ENCODE measurements at regions of chr7 and their contacts with region 1.

Region 1: DNA sequence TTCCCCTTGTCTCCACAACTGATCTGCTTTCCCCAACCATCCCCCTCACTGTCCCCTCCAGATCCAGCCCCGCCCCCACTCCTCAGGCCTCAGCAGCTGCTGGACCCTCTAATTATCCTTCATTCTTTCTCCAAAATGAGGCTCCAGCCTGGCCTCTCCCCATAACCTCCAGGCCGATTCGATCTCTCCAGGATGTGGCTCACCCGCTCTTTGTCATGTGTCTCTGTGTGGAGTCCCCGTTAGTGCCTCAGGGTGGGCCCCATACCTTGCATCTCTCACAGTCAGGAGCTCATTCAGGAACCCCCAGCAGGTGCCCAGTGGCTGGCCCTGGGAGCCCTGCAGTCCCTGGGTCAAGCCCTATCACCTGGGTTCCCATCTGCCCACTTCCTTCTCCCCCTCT is 1.3 kb downstream of the PILRA start:
- DNase-seq: no peak
- ATAC-seq: peak; percentile 68
- H3K4me3 ChIP-seq: peak overlapping the region; percentile 61
- H3K27ac ChIP-seq: peak overlapping the region; percentile 78
- H3K4me1 ChIP-seq: peaks cover 28% of the 10 kb centered on the region
- H3K27me3 ChIP-seq: no peaks in the 10 kb centered on the region
- CTCF ChIP-seq: no peak
- EP300 ChIP-seq: no peak
- POLR2A ChIP-seq: no peak
- RAD21 ChIP-seq: no peak

Region 2: GRCh38 chr7:100358027-100358865 is 16.4 kb before region 1 on chr7 and contains the start of gene PILRB:
- CTCF ChIA-PET with region 1: interaction called, 7 read pairs
- POLR2A ChIA-PET with region 1: interaction called, 3 read pairs
- RAD21 ChIA-PET with region 1: interaction called, 10 read pairs
- SMC1A ChIA-PET with region 1: interaction called, 4 read pairs
- in situ Hi-C with region 1: no loop called
- intact Hi-C with region 1: no loop called
- DNase-seq: no peak
- ATAC-seq: peak; percentile 89
- H3K4me3 ChIP-seq: no peak within 1 kb of the TSS
- H3K27ac ChIP-seq: peak within 1 kb of the TSS; percentile 62
- H3K4me1 ChIP-seq: peaks cover 14% of the 10 kb centered on the region
- H3K27me3 ChIP-seq: no peaks in the 10 kb centered on the region
- CTCF ChIP-seq: peak; percentile 23 to 51 (median 48); a peak in 4 of 6 replicates
- EP300 ChIP-seq: no peak
- POLR2A ChIP-seq: peak; percentile 17; the same call in 1 of the 2 replicates
- RAD21 ChIP-seq: peak; percentile 31
- polyA plus RNA-seq, gene PILRB: 2.6 to 5.6 TPM

Region 3: DNA sequence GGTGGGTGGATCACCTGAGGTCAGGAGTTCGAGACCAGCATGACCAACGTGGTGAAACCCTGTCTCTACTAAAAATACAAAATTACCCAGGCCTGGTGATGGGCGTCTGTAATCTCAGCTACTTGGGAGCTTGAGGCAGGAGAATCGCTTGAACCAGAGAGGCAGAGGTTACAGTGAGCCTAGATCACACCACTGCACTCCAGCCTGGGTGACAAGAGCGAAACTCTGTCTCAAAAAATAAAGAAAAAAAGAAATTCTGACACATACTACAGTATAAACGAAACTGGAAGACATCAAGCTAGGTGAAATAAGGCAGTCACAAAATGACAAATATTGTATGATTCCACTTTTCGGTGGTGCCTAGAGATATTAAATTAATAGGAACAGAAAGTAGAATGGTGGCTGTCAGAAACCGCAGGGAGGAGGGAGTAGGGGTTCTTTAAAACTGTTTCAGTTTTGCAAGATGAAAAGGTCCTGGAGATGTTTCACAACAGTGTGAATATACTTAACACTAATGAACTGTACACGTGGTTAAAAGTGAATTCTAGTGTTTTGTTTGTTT is 21.9 kb after region 1 on chr7:
- CTCF ChIA-PET with region 1: interaction called, 8 read pairs
- POLR2A ChIA-PET with region 1: interaction called, 11 read pairs
- RAD21 ChIA-PET with region 1: interaction called, 27 read pairs
- SMC1A ChIA-PET with region 1: interaction called, 27 read pairs
- in situ Hi-C with region 1: no loop called
- intact Hi-C with region 1: loop called (anchors 2 kb)
- DNase-seq: peak; percentile 93
- ATAC-seq: peak; percentile 92
- H3K4me3 ChIP-seq: peak overlapping the region; percentile 43; the same call in 1 of the 2 replicates
- H3K27ac ChIP-seq: peak overlapping the region; percentile 72
- H3K4me1 ChIP-seq: peaks cover 33% of the 10 kb centered on the region
- H3K27me3 ChIP-seq: no peaks in the 10 kb centered on the region
- CTCF ChIP-seq: no peak
- EP300 ChIP-seq: peak; percentile 63 to 92; a peak in 2 of 4 replicates
- POLR2A ChIP-seq: no peak
- RAD21 ChIP-seq: no peak

Region 4: GRCh38 chr7:100418930-100419659 is 44.5 kb after region 1 on chr7:
- CTCF ChIA-PET with region 1: interaction called, 7 read pairs
- POLR2A ChIA-PET with region 1: interaction called, 14 read pairs
- RAD21 ChIA-PET with region 1: interaction called, 10 read pairs
- SMC1A ChIA-PET with region 1: interaction called, 10 read pairs
- in situ Hi-C with region 1: no loop called
- intact Hi-C with region 1: no loop called
- DNase-seq: no peak
- ATAC-seq: peak; percentile 80
- H3K4me3 ChIP-seq: no peak overlapping the region
- H3K27ac ChIP-seq: peak overlapping the region; percentile 35; the same call in 1 of the 2 replicates
- H3K4me1 ChIP-seq: peaks cover 16% of the 10 kb centered on the region
- H3K27me3 ChIP-seq: no peaks in the 10 kb centered on the region
- CTCF ChIP-seq: peak in 2 of 3 experiments; percentile 2 to 18; a peak in 1 of 6 replicates
- EP300 ChIP-seq: no peak
- POLR2A ChIP-seq: no peak
- RAD21 ChIP-seq: no peak

Region 5: DNA sequence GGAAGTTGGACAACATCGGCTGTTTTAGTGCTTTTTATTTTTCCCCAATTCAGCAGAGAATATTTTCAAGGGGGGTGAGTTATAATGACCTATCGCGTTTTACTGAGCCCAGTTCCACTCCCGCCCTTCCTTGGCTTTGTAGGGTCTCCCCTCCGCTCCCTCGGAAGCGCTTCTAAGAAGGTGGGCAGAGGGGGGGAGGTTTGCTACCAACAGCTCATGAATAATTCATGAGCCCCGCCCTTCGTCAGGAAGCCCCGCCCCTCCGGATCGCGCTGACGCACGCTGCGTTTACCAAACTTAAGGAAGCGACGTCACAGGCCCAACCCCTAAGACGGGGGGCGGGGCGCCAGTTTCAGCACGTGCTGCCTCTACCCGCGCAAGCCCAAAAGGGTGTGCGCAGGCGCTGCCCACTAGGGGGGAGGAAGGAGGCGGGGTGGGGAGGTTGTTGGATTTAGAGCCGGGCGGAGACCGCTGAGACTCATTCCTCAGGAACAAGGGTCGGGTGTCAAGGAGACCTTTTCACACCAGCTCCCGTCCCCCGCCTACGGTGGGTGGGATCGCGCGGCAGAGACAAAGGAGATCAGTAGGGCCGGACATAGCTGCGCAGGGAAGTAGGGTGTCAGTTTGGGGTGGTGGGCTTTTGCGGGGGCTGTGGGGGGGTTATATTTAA is 54.5 kb after region 1 on chr7:
- CTCF ChIA-PET with region 1: interaction called, 8 read pairs
- POLR2A ChIA-PET with region 1: interaction called, 15 read pairs
- RAD21 ChIA-PET with region 1: interaction called, 25 read pairs
- SMC1A ChIA-PET with region 1: interaction called, 9 read pairs
- in situ Hi-C with region 1: no loop called
- intact Hi-C with region 1: no loop called
- DNase-seq: peak; percentile 96
- ATAC-seq: peak; percentile 68
- H3K4me3 ChIP-seq: peak overlapping the region; percentile 74
- H3K27ac ChIP-seq: peak overlapping the region; percentile 99
- H3K4me1 ChIP-seq: peaks cover 28% of the 10 kb centered on the region
- H3K27me3 ChIP-seq: no peaks in the 10 kb centered on the region
- CTCF ChIP-seq: no peak
- EP300 ChIP-seq: peak in 1 of 2 experiments; percentile 72; a peak in 2 of 4 replicates
- POLR2A ChIP-seq: peak; percentile 89
- RAD21 ChIP-seq: no peak

Region 6: DNA sequence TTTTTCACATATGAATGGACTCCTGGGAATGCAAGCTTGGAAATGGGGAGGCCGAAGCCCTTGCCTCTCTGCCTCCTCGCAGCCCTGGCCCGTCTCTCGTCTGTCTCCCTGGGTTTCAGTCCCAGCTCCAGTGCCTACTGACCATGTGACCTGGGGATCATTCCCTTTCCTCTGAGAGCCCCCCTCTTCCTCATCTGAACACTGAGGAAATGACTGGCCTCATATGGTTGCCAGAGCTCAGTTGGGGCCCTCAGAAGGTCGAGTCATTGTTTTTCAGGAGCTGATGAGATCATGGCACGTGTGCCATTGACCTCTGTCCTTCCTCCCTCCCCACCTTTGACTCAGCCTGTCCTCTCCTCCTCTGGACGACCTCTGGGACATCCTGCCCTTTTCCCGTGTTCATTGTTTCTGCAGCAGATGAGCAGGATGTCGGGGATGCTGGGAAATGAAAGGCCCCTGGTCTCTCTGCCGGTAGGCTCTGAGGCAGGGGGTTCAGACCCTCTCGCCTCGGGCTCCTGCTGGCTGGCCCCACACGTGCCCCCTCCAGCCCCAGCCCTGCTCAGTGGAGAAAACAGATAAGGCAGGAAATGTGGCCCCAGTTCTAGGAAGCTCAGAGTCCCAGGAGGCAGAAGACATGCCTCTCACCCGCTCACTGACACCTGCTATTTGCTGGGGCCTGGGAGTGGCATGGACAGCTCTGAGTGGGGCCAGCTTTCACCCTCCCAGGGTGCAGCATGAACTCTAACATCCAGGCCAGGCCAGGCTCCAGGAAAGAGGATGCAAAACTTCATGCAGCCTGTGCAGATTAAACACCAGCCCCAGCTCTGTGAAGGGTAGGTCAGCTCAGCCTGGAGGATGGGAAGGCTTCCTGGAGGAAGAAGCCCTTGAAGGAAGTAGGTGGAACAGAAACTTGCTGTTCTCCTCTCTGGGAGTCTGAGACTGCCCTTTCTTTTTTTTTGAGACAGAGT is 70.0 kb after region 1 on chr7:
- CTCF ChIA-PET with region 1: interaction called, 12 read pairs
- POLR2A ChIA-PET with region 1: interaction called, 3 read pairs
- RAD21 ChIA-PET with region 1: interaction called, 11 read pairs
- SMC1A ChIA-PET with region 1: interaction called, 8 read pairs
- in situ Hi-C with region 1: no loop called
- intact Hi-C with region 1: no loop called
- DNase-seq: no peak
- ATAC-seq: peak; percentile 70
- H3K4me3 ChIP-seq: no peak overlapping the region
- H3K27ac ChIP-seq: peak overlapping the region; percentile 3; the same call in 1 of the 2 replicates
- H3K4me1 ChIP-seq: peaks cover 14% of the 10 kb centered on the region
- H3K27me3 ChIP-seq: no peaks in the 10 kb centered on the region
- CTCF ChIP-seq: no peak
- EP300 ChIP-seq: no peak
- POLR2A ChIP-seq: no peak
- RAD21 ChIP-seq: no peak